ENCODE measurements at regions of chr14 and their contacts with region 1.

Region 1: GRCh38 chr14:67276131-67276530 is 34.9 kb downstream of the PALS1 start:
- DNase-seq: no peak
- ATAC-seq: no peak
- H3K4me3 ChIP-seq: no peak overlapping the region
- H3K27ac ChIP-seq: no peak overlapping the region
- H3K4me1 ChIP-seq: peaks cover 18% of the 10 kb centered on the region
- H3K27me3 ChIP-seq: no peaks in the 10 kb centered on the region
- CTCF ChIP-seq: no peak

Region 2: GRCh38 chr14:67240978-67241414 is 35.1 kb before region 1 on chr14:
- intact Hi-C with region 1: loop called in 1 of 2 experiments (anchors 1 kb)
- DNase-seq: peak; percentile 98 to 99
- ATAC-seq: peak; percentile 94 to 98 (median 97)
- H3K4me3 ChIP-seq: peak overlapping the region; percentile 100
- H3K27ac ChIP-seq: peak overlapping the region; percentile 100
- H3K4me1 ChIP-seq: peaks cover 5% of the 10 kb centered on the region
- H3K27me3 ChIP-seq: no peaks in the 10 kb centered on the region
- CTCF ChIP-seq: no peak